Gastrocnemius medialis (tissue), 4 donors: ENCODE measurements at regions of chr1 and their contacts with region 1.

Region 1: DNA sequence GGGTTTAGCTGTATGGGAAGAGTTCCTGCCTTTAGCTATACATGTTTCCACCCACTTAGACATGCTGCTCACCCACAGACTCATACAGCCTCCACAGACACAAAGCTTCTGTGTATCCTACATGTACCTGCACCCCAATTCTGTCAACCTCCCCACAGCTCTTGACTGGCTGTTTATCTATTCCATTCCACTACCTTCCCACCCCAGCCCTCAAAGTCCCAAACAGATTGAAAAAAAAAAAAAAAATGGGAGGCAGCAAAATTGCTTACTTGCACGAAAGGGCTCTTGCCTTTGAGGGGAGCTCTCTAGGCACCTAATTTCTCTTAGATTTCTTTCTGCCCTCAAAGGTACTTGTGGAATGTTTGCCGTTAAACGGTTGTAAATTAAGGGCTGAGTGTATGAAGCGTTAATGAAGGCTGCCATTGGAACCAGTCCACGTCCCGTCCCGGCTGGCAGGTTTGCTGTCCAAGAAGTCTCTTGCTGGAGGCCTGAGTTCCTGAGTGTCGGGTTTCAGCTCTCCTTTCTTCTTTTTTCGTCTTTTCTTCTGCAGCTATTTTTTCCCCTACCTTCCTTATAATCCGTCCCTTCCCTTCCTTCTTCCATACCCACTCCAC is 43.6 kb downstream of the PBX1 start:
- DNase-seq: peak; percentile 26 to 49
- ATAC-seq: peak; percentile 55 to 71
- H3K4me3 ChIP-seq: peak overlapping the region; percentile 19 to 27 (median 24)
- H3K27ac ChIP-seq: peak overlapping the region; percentile 70 to 80 (median 76)
- H3K4me1 ChIP-seq: peaks cover 40 to 68% of the 10 kb centered on the region in 2 donors
- H3K27me3 ChIP-seq: no peaks in the 10 kb centered on the region
- CTCF ChIP-seq: no peak
- POLR2A ChIP-seq: no peak

Region 2: DNA sequence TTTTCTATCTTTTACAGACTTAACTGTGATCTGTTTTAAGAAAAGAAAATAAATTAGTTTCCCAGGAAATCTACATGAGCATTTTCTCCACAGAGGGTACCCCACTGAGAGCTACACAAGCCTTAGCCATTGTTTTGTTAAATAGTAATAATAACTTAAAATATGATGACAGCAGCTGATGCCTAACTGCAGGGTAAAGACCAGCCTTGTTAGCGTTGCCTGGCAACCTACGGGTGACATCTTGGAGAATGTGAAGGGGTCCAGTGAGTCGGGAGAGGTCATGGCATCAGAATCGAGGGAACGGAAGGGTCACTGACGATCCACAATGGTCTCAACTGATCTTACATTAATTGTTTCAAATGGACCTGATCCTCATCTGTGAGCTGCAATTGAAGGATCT is 276.8 kb before region 1 on chr1:
- in situ Hi-C with region 1: no loop called
- intact Hi-C with region 1: no loop called
- DNase-seq: no peak
- ATAC-seq: no peak
- H3K4me3 ChIP-seq: no peak overlapping the region
- H3K27ac ChIP-seq: no peak overlapping the region
- H3K4me1 ChIP-seq: no peaks in the 10 kb centered on the region
- H3K27me3 ChIP-seq: no peaks in the 10 kb centered on the region
- CTCF ChIP-seq: no peak
- POLR2A ChIP-seq: no peak

Region 3: GRCh38 chr1:164660412-164660772 is 57.8 kb after region 1 on chr1:
- in situ Hi-C with region 1: loop called in 1 of 4 experiments (anchors 10 kb)
- intact Hi-C with region 1: no loop called
- DNase-seq: no peak
- ATAC-seq: peak; percentile 28 to 36
- H3K4me3 ChIP-seq: no peak overlapping the region
- H3K27ac ChIP-seq: peak overlapping the region; percentile 74 to 84 (median 83)
- H3K4me1 ChIP-seq: peaks cover 31 to 47% of the 10 kb centered on the region in 2 donors
- H3K27me3 ChIP-seq: no peaks in the 10 kb centered on the region
- CTCF ChIP-seq: no peak
- POLR2A ChIP-seq: no peak